ENCODE measurements at regions of chr12 and their contacts with region 1.

Region 1: GRCh38 chr12:71746983-71747611 is 7.6 kb upstream of the RAB21 start:
- DNase-seq: peak; percentile 61
- H3K4me3 Mint-ChIP-seq: no peak overlapping the region
- H3K27ac Mint-ChIP-seq: no peak overlapping the region
- H3K4me1 Mint-ChIP-seq: no peaks in the 10 kb centered on the region
- H3K27me3 Mint-ChIP-seq: peaks cover 38% of the 10 kb centered on the region
- CTCF ChIP-seq: peak; percentile 72

Region 2: DNA sequence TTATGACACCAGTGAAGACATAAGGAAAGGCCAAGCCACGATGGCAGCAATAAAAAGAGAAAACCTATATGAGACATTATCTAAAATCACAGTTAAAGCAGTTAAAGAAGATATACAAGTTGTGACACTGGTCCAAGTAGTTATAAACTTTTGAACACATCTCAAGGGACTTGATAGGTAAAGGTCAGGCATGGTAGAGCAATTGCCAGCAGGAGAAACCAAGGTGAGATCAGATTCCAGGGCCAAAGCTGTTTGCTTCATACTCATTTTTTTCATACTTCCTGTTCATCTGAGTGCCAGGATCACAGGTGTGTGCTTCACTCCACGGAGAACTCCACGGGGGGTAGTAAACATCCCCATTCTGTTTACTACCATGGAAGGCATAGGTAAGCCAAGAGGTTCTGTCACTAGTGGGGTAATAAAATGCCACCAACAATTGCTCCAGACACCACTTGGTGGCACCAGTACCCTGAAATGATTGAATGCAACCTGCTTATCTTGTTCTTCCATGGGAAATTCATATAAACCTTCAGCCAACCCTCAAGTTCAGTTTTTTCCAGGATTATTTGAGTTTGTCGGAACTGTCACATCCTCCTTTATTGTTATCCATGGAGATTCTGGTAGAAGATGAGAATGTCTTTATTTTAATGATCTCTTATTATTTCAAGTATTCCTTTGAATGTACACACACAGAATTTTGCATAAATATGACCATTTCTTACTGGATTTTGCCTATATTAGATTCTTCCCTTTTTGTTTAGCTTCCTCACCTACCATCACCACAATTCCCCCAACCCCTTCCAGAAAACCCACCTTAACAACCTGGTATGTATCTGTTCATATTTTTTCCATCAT is 530.1 kb before region 1 on chr12:
- CTCF ChIA-PET with region 1: no interaction called
- intact Hi-C with region 1: loop called (anchors 10 kb)
- DNase-seq: peak; percentile 65
- H3K4me3 Mint-ChIP-seq: no peak overlapping the region
- H3K27ac Mint-ChIP-seq: peak overlapping the region; percentile 84
- H3K4me1 Mint-ChIP-seq: peaks cover 40% of the 10 kb centered on the region
- H3K27me3 Mint-ChIP-seq: no peaks in the 10 kb centered on the region
- CTCF ChIP-seq: peak; percentile 47

Region 3: GRCh38 chr12:71415336-71416231 is 331.5 kb before region 1 on chr12:
- CTCF ChIA-PET with region 1: interaction called, 6 read pairs
- intact Hi-C with region 1: loop called (anchors 2 kb)
- DNase-seq: peak; percentile 56
- H3K4me3 Mint-ChIP-seq: no peak overlapping the region
- H3K27ac Mint-ChIP-seq: no peak overlapping the region
- H3K4me1 Mint-ChIP-seq: no peaks in the 10 kb centered on the region
- H3K27me3 Mint-ChIP-seq: peaks cover 10% of the 10 kb centered on the region
- CTCF ChIP-seq: peak; percentile 81

Region 4: DNA sequence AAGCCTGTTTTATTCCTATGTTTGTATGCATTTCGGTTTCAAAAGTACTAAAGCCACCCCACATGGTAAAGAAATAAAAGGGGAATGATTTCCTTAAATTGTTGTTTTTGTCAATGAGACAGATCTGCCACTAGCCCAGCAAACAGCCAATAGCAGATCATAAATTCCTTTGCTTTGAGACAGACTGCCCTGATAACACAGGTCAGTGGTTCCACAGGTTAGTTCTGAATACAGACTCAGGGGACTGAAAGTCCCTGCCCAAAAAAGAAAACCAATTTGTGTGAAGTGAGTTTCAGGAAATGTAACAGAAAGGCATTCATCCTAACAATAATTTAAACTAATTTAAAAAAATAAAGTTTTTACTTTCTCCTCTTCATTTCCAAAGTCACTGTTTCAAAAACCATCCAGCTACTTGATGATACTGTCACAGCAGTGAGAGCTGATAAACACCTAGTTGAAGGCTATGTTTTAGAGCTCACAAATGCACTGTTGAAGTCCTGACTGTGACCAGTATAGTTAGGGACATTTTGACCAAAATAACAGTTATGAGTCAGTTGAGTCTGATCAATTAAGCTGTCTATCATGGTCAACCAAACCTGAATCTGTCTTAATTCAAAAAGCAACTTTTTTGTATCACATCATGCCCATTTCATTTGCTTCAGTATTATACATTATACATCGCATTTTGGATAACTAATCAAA is 229.8 kb before region 1 on chr12:
- CTCF ChIA-PET with region 1: no interaction called
- intact Hi-C with region 1: no loop called
- DNase-seq: no peak
- H3K4me3 Mint-ChIP-seq: no peak overlapping the region
- H3K27ac Mint-ChIP-seq: no peak overlapping the region
- H3K4me1 Mint-ChIP-seq: no peaks in the 10 kb centered on the region
- H3K27me3 Mint-ChIP-seq: peaks cover 41% of the 10 kb centered on the region
- CTCF ChIP-seq: no peak

Region 5: GRCh38 chr12:71636704-71637115 is 110.4 kb before region 1 on chr12:
- CTCF ChIA-PET with region 1: interaction called, 26 read pairs
- intact Hi-C with region 1: loop called (anchors 2 kb)
- DNase-seq: peak; percentile 38
- H3K4me3 Mint-ChIP-seq: no peak overlapping the region
- H3K27ac Mint-ChIP-seq: peak overlapping the region; percentile 55
- H3K4me1 Mint-ChIP-seq: no peaks in the 10 kb centered on the region
- H3K27me3 Mint-ChIP-seq: no peaks in the 10 kb centered on the region
- CTCF ChIP-seq: peak; percentile 82

Region 6: DNA sequence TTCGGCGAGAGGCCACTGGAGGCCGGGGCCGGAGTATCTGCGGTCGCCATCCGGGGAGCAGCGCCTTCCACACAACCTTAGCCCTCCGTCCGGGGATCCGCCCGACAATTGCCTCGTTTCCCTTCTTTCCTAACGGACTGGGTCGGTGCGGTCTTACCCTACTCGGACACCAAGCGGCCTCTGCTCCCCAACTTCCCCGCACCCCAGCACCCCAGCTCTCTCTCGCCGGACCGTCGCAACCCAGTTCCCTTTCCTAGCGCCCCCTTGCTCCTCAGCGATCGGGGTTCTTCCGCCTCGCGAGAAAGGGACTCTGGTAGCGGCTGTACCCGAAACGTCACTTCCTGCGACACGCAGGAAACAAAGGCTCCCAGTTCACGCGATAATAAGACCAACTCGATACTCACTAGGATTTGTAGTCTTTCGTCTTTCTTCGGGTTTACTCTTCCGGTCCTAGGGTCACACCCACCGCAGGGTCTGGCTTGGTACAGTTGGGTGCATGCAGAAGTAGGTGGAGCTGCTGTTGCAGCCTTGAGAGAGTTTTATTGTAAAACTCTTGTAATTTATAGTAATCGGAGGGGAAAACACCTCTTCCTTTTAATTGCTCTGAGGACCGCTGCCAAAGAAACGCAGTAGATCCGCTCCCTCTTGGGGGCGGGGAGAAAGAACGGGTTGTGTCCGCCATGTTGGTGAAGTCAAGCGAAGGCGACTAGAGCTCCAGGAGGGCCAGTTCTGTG is 83.4 kb before region 1 on chr12 and contains the start of gene ZFC3H1:
- CTCF ChIA-PET with region 1: interaction called, 27 read pairs
- intact Hi-C with region 1: loop called (anchors 1 kb)
- DNase-seq: peak; percentile 94
- H3K4me3 Mint-ChIP-seq: peak within 1 kb of the TSS; percentile 97
- H3K27ac Mint-ChIP-seq: peak within 1 kb of the TSS; percentile 98
- H3K4me1 Mint-ChIP-seq: peaks cover 17% of the 10 kb centered on the region
- H3K27me3 Mint-ChIP-seq: no peaks in the 10 kb centered on the region
- CTCF ChIP-seq: peak; percentile 23
- total RNA-seq, gene ZFC3H1: 64.0 and 66.6 TPM in 2 replicates

Region 7: DNA sequence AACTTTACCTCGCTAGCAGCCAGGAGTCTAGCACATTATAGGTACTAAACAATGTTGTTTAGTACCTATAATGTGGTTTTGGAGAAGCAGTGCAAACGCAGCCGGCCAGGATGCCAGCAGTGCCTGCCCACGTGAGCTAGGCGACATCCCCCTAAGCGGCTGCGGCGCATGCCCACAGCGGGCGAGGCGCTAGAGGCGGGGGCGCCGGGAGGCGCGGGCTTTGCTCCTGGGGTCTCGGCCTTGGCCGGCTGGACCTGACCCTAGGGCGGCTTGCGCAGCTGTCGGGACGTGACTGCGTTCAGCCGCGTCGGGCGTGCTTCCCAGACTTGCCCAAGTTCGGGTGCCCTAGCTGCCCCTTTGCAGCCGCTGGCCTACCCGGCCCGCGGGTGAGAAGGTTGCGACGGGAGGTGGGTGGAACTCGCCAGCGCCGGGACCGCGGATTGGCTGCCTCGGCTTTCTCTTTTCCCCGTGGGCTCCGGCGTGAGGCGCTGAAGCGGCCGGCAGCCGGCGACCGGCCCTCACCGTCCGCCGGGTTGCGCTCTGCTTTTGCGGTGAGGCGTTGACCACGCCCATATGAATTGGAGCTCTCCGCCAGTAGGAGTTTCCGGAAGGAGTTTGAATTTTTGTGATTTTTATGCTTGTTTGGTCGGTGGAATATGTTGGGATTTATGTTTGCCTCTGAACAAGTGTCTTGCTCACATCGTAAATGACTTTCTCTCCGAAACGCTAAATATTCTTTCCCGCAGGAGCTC is 61.0 kb before region 1 on chr12 and contains the start of gene TMEM19:
- CTCF ChIA-PET with region 1: interaction called, 42 read pairs
- intact Hi-C with region 1: loop called (anchors 1 kb)
- DNase-seq: peak; percentile 94
- H3K4me3 Mint-ChIP-seq: peak within 1 kb of the TSS; percentile 85
- H3K27ac Mint-ChIP-seq: peak within 1 kb of the TSS; percentile 82
- H3K4me1 Mint-ChIP-seq: peaks cover 8% of the 10 kb centered on the region
- H3K27me3 Mint-ChIP-seq: no peaks in the 10 kb centered on the region
- CTCF ChIP-seq: no peak
- total RNA-seq, gene TMEM19: 20.6 and 29.6 TPM in 2 replicates